PC-3 (cell line): ENCODE measurements at regions of chr1 and their contacts with region 1.

Region 1: DNA sequence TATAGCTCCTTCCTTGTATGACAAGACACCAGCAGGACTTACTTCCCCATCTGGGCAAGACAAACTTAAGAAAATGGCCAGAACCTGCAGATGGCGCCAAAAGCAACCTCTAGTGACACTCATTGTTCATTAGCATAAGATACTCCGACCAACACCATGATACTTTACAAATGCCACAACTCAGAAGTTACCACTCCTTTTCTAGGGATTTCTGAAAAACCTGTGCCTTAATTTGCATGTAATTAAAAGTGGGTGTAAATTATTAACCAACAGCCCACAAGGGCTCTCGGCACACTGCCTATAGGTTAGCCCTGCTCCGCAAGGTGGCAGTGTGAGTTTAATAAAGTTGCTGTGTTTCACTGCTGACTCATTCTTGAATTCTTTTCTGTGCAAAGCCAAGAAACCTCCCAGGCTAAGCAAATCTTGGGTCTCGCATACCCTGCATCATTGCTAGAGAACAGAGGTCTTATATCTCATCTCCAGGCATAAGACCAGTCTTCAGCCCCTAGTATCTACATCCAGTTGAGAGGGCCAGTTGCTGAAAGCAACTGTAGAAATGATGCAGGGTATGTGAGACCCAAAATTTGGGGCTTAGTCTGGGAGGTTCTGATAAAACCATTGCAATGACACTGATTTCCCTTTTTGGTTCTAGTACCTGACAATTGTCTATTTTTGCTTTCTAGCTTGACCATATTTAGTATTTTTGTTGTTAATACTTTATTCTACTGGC is 86.4 kb downstream of the FAF1 start:
- DNase-seq: peak; percentile 89
- ATAC-seq: peak; percentile 96
- H3K4me3 ChIP-seq: peak overlapping the region; percentile 59
- H3K27ac ChIP-seq: no peak overlapping the region
- H3K4me1 ChIP-seq: peaks cover 9% of the 10 kb centered on the region
- H3K27me3 ChIP-seq: no peaks in the 10 kb centered on the region
- CTCF ChIP-seq: peak; percentile 100

Region 2: GRCh38 chr1:50774759-50775351 is 98.8 kb before region 1 on chr1:
- CTCF ChIA-PET with region 1: interaction called, 6 read pairs
- POLR2A ChIA-PET with region 1: no interaction called
- intact Hi-C with region 1: loop called (anchors 2 kb)
- DNase-seq: peak; percentile 77
- ATAC-seq: peak; percentile 70
- H3K4me3 ChIP-seq: no peak overlapping the region
- H3K27ac ChIP-seq: no peak overlapping the region
- H3K4me1 ChIP-seq: no peaks in the 10 kb centered on the region
- H3K27me3 ChIP-seq: no peaks in the 10 kb centered on the region
- CTCF ChIP-seq: peak; percentile 83

Region 3: GRCh38 chr1:50929376-50929958 is 55.8 kb after region 1 on chr1:
- CTCF ChIA-PET with region 1: interaction called, 10 read pairs
- POLR2A ChIA-PET with region 1: no interaction called
- intact Hi-C with region 1: no loop called
- DNase-seq: peak; percentile 64
- ATAC-seq: no peak
- H3K4me3 ChIP-seq: no peak overlapping the region
- H3K27ac ChIP-seq: no peak overlapping the region
- H3K4me1 ChIP-seq: no peaks in the 10 kb centered on the region
- H3K27me3 ChIP-seq: no peaks in the 10 kb centered on the region
- CTCF ChIP-seq: peak; percentile 78

Region 4: DNA sequence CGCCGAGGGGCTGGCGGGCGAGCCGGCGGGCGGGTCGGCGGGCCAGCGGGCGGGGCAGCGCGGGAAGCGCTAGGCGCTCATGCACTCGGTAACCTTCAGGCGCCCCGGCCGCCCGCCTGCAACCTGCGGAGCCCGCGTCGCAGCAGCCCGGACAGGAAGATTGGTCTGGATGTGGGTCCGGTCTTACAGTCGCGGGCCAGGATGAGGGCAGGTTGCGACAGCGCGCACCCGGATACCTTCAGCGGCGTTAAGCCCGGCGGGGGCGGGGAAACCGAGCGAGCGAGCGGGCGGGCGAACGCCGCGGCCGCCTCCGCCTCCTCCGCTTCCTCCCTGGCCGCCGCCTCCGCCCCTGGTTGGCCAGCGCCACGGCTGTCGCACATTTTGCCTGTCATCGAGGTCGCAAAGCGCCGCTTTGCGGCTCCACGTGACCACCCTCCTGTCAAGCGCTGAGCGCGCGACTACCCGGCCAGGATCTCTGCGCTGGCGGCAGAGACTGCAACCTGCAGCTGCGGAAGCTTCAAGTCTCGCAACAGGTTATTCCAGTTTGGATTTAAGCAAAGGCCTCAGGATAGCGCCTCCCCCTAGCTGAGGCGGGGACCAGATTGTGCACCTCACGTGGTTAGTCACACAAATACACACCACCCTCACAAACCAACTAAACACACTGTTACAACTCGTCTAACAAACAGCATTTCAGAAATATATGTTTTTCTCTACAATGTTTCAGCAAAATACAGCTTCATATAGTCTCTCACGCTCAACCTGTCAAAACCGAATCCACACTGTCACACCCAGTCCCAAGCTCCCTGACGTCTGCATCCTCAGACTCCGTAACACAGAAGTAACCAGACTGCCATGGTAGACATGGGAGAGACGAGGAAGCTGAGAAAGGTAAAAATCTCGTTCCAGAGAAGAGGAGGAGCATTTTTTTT is 86.6 kb after region 1 on chr1 and contains the start of gene FAF1:
- CTCF ChIA-PET with region 1: no interaction called
- POLR2A ChIA-PET with region 1: no interaction called
- intact Hi-C with region 1: loop called (anchors 10 kb)
- DNase-seq: peak; percentile 99
- ATAC-seq: peak; percentile 84
- H3K4me3 ChIP-seq: peak within 1 kb of the TSS; percentile 97
- H3K27ac ChIP-seq: peak within 1 kb of the TSS; percentile 81
- H3K4me1 ChIP-seq: peaks cover 7% of the 10 kb centered on the region; the same call in 1 of the 2 replicates
- H3K27me3 ChIP-seq: no peaks in the 10 kb centered on the region
- CTCF ChIP-seq: peak; percentile 49
- total RNA-seq, gene FAF1: 12.7 and 14.7 TPM in 2 replicates

Region 5: DNA sequence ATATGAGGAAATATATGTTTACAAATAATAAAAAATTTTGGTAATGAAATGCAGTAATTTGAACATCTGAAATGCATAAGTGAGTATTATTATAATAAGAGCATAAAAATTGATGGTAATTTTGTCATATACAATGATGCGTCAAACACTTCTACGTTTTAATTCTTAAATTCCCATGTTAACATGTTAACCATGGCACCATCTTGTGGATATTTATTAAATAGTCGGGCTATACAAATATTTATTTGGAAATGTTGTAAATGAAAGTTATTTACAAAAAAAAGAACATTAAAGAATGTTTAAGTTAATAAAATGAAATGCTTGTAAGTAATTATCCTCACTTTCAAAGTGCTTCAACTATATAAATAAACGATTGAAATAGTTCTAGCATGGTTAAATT is 171.2 kb after region 1 on chr1:
- CTCF ChIA-PET with region 1: no interaction called
- POLR2A ChIA-PET with region 1: no interaction called
- intact Hi-C with region 1: loop called (anchors 2 kb)
- DNase-seq: peak; percentile 50
- ATAC-seq: no peak
- H3K4me3 ChIP-seq: no peak overlapping the region
- H3K27ac ChIP-seq: no peak overlapping the region
- H3K4me1 ChIP-seq: no peaks in the 10 kb centered on the region
- H3K27me3 ChIP-seq: no peaks in the 10 kb centered on the region
- CTCF ChIP-seq: peak; percentile 58